ENCODE measurements at regions of chr1 and their contacts with region 1.

Region 1: GRCh38 chr1:92994105-92994712 is 32.9 kb upstream of the DIPK1A start:
- DNase-seq: peak; percentile 47 to 81 (median 74)
- H3K4me3 ChIP-seq: no peak overlapping the region
- H3K4me3 Mint-ChIP-seq: no peak overlapping the region
- H3K27ac ChIP-seq: no peak overlapping the region
- H3K27ac Mint-ChIP-seq: peak overlapping the region in 7 of 8 donors; percentile 9 to 76 (median 31)
- H3K4me1 ChIP-seq: peaks cover 49% of the 10 kb centered on the region
- H3K4me1 Mint-ChIP-seq: peaks cover 35 to 49% (median 48%) of the 10 kb centered on the region in 3 donors
- H3K27me3 ChIP-seq: no peaks in the 10 kb centered on the region
- H3K27me3 Mint-ChIP-seq: peaks cover 0 to 1% of the 10 kb centered on the region in 2 donors

Region 2: GRCh38 chr1:92882819-92883218 is 111.4 kb before region 1 on chr1:
- CTCF ChIA-PET with region 1: interaction called, 15 read pairs
- POLR2A ChIA-PET with region 1: no interaction called
- DNase-seq: peak; percentile 20 to 62 (median 34)
- H3K4me3 ChIP-seq: no peak overlapping the region
- H3K4me3 Mint-ChIP-seq: peak overlapping the region in 6 of 7 donors; percentile 15 to 54 (median 42)
- H3K27ac ChIP-seq: no peak overlapping the region
- H3K27ac Mint-ChIP-seq: peak overlapping the region; percentile 86 to 98 (median 94)
- H3K4me1 ChIP-seq: peaks cover 26% of the 10 kb centered on the region
- H3K4me1 Mint-ChIP-seq: peaks cover 40 to 54% (median 45%) of the 10 kb centered on the region in 3 donors
- H3K27me3 ChIP-seq: no peaks in the 10 kb centered on the region
- H3K27me3 Mint-ChIP-seq: no peaks in the 10 kb centered on the region

Region 3: GRCh38 chr1:92951141-92951582 is 43.0 kb before region 1 on chr1:
- CTCF ChIA-PET with region 1: interaction called, 10 read pairs
- POLR2A ChIA-PET with region 1: no interaction called
- DNase-seq: peak in 1 of 5 donors; percentile 36
- H3K4me3 ChIP-seq: no peak overlapping the region
- H3K4me3 Mint-ChIP-seq: no peak overlapping the region
- H3K27ac ChIP-seq: peak overlapping the region; percentile 5
- H3K27ac Mint-ChIP-seq: no peak overlapping the region
- H3K4me1 ChIP-seq: peaks cover 48% of the 10 kb centered on the region
- H3K4me1 Mint-ChIP-seq: peaks cover 30 to 41% (median 38%) of the 10 kb centered on the region in 3 donors
- H3K27me3 ChIP-seq: no peaks in the 10 kb centered on the region
- H3K27me3 Mint-ChIP-seq: no peaks in the 10 kb centered on the region

Region 4: GRCh38 chr1:92968138-92969032 is 25.8 kb before region 1 on chr1:
- CTCF ChIA-PET with region 1: interaction called, 172 read pairs
- POLR2A ChIA-PET with region 1: interaction called, 3 read pairs
- DNase-seq: peak in 2 of 5 donors; percentile 32
- H3K4me3 ChIP-seq: no peak overlapping the region
- H3K4me3 Mint-ChIP-seq: no peak overlapping the region
- H3K27ac ChIP-seq: no peak overlapping the region
- H3K27ac Mint-ChIP-seq: peak overlapping the region in 3 of 8 donors; percentile 8 to 83 (median 18)
- H3K4me1 ChIP-seq: peaks cover 49% of the 10 kb centered on the region
- H3K4me1 Mint-ChIP-seq: peaks cover 19 to 29% (median 26%) of the 10 kb centered on the region in 3 donors
- H3K27me3 ChIP-seq: no peaks in the 10 kb centered on the region
- H3K27me3 Mint-ChIP-seq: no peaks in the 10 kb centered on the region

Region 5: DNA sequence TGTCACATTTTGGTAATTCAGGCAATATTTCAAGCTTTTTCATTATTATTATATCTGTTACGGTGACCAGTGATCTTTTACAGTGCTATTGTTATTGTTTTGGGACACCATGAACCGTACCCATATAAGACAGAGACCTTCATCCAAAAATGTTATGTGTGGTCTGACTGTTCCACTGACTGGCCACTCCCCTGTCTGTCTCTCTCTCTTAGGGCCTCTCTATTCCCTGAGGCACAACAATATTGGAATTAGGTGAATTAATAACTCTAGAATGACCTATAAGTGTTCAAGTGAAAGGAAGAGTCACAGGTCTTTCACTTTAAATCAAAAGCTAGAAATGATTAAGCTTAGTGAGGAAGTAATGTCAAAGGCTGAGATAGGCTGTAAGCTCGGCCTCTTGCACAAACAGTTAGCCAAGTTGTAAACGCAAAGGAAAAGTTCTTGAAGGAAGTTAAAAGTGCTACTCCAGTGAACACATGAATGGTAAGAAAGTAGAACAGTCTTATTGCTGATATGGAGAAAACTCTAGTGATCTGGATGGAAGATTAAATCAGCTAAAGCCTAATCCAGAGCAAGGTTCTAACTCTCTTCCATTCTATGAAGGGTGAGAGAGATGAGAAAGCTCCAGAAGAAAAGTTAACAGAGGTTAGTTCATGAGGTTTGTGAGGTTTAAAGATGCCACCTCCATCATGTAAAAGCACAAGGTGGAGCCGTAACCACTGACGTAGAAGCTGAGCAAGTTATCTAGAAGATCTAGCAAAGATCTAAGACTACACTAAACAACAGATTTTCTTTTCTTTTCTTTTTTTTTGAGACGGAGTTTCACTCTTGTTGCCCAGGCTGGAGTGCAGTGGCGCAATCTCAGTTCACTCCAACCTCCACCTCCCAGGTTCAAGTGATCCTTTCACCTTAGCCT is 13.2 kb before region 1 on chr1:
- CTCF ChIA-PET with region 1: interaction called, 172 read pairs
- POLR2A ChIA-PET with region 1: interaction called, 6 read pairs
- DNase-seq: peak; percentile 9 to 86 (median 82)
- H3K4me3 ChIP-seq: peak overlapping the region; percentile 2
- H3K4me3 Mint-ChIP-seq: peak overlapping the region; percentile 4 to 77 (median 68)
- H3K27ac ChIP-seq: peak overlapping the region; percentile 32
- H3K27ac Mint-ChIP-seq: peak overlapping the region; percentile 88 to 99 (median 96)
- H3K4me1 ChIP-seq: peaks cover 27% of the 10 kb centered on the region
- H3K4me1 Mint-ChIP-seq: peaks cover 22 to 50% (median 39%) of the 10 kb centered on the region in 3 donors
- H3K27me3 ChIP-seq: no peaks in the 10 kb centered on the region
- H3K27me3 Mint-ChIP-seq: no peaks in the 10 kb centered on the region